Endothelial cell of umbilical vein (primary cell): ENCODE measurements at regions of chr2 and their contacts with region 1.

Region 1: GRCh38 chr2:146927080-146927711 is 917.6 kb upstream of the ACVR2A start:
- DNase-seq: peak; percentile 59
- H3K4me3 ChIP-seq: no peak overlapping the region
- H3K27ac ChIP-seq: no peak overlapping the region
- H3K4me1 ChIP-seq: no peaks in the 10 kb centered on the region
- H3K27me3 ChIP-seq: no peaks in the 10 kb centered on the region
- CTCF ChIP-seq: peak; percentile 32 to 62
- POLR2A ChIP-seq: no peak

Region 2: GRCh38 chr2:145927131-145927950 is 999.9 kb before region 1 on chr2:
- CTCF ChIA-PET with region 1: no interaction called
- POLR2A ChIA-PET with region 1: no interaction called
- dilution Hi-C with region 1: no loop called
- intact Hi-C with region 1: no loop called
- DNase-seq: no peak
- H3K4me3 ChIP-seq: no peak overlapping the region
- H3K27ac ChIP-seq: no peak overlapping the region
- H3K4me1 ChIP-seq: no peaks in the 10 kb centered on the region
- H3K27me3 ChIP-seq: no peaks in the 10 kb centered on the region
- CTCF ChIP-seq: no peak
- POLR2A ChIP-seq: no peak

Region 3: DNA sequence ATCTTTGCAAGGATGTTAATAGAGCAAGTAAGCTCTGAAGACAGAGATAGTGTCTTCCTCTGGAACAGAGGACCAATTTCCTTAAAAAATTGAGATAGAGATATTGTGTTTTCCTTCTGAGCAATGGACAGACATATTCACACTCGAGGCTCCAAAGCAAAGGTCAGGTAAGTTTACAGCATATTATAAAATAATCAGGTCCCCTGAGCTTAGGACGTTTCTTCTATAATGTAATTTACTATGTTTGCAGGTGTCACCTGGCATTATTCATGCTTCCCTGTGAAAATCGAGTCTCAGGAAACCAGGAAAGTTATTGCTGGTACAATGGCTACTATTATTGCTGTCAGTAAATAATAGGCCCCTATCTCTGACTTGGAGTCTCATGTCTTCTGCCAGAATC is 218.2 kb before region 1 on chr2:
- CTCF ChIA-PET with region 1: no interaction called
- POLR2A ChIA-PET with region 1: no interaction called
- dilution Hi-C with region 1: no loop called
- intact Hi-C with region 1: no loop called
- DNase-seq: no peak
- H3K4me3 ChIP-seq: no peak overlapping the region
- H3K27ac ChIP-seq: no peak overlapping the region
- H3K4me1 ChIP-seq: no peaks in the 10 kb centered on the region
- H3K27me3 ChIP-seq: no peaks in the 10 kb centered on the region
- CTCF ChIP-seq: no peak
- POLR2A ChIP-seq: no peak

Region 4: GRCh38 chr2:147843864-147844696 is 916.9 kb after region 1 on chr2:
- CTCF ChIA-PET with region 1: interaction called, 18 read pairs
- POLR2A ChIA-PET with region 1: no interaction called
- dilution Hi-C with region 1: no loop called
- intact Hi-C with region 1: loop called (anchors 2 kb)
- DNase-seq: peak; percentile 85
- H3K4me3 ChIP-seq: peak overlapping the region; percentile 60 to 95 (median 85)
- H3K27ac ChIP-seq: peak overlapping the region; percentile 70
- H3K4me1 ChIP-seq: peaks cover 20% of the 10 kb centered on the region
- H3K27me3 ChIP-seq: peaks cover 0 to 2% of the 10 kb centered on the region in 2 experiments
- CTCF ChIP-seq: peak in 1 of 2 donors; percentile 23
- POLR2A ChIP-seq: no peak